ENCODE measurements at regions of chr6 and their contacts with region 1.

Region 1: GRCh38 chr6:797479-798077 is 104.6 kb upstream of the EXOC2 start:
- DNase-seq: peak; percentile 41
- ATAC-seq: peak; percentile 78
- H3K4me3 ChIP-seq: no peak overlapping the region
- H3K27ac ChIP-seq: no peak overlapping the region
- H3K4me1 ChIP-seq: no peaks in the 10 kb centered on the region
- H3K27me3 ChIP-seq: peaks cover 22% of the 10 kb centered on the region
- CTCF ChIP-seq: peak; percentile 62 to 77 (median 73)
- POLR2A ChIP-seq: no peak
- RAD21 ChIP-seq: peak; percentile 87

Region 2: DNA sequence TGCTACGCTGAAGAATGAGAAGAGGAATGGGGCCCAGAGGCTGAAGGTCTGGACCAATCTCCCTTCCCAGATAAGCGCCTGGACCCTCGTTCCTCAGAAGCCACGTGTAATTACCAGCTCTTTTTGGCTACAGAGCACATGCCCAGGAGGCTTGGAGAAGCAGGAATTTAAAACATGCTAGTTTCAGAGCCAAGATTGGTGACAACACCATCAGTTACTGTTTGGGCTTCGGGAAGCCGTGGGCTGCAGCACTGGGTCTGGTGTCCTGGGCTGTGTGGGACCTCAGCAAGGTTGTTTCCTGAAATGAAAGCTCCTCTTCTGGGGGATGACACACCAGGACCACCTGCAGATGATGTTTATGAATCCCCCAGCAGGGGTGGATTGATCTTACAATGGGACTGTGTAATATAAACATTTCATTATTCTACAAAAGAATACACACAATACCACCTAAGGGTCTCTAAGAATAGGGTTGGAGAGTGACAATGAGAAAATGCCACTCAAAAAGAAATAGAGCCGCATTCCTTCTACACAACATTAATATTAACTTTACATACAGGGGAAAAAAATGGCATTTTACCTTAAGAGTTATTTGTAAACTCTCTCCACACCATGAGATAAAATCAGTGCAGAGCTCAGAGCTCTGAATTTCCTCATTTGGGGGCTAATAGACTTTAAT is 306.5 kb after region 1 on chr6:
- CTCF ChIA-PET with region 1: no interaction called
- POLR2A ChIA-PET with region 1: no interaction called
- RAD21 ChIA-PET with region 1: no interaction called
- intact Hi-C with region 1: no loop called
- DNase-seq: no peak
- ATAC-seq: no peak
- H3K4me3 ChIP-seq: no peak overlapping the region
- H3K27ac ChIP-seq: no peak overlapping the region
- H3K4me1 ChIP-seq: no peaks in the 10 kb centered on the region
- H3K27me3 ChIP-seq: no peaks in the 10 kb centered on the region
- CTCF ChIP-seq: no peak
- POLR2A ChIP-seq: no peak
- RAD21 ChIP-seq: no peak

Region 3: DNA sequence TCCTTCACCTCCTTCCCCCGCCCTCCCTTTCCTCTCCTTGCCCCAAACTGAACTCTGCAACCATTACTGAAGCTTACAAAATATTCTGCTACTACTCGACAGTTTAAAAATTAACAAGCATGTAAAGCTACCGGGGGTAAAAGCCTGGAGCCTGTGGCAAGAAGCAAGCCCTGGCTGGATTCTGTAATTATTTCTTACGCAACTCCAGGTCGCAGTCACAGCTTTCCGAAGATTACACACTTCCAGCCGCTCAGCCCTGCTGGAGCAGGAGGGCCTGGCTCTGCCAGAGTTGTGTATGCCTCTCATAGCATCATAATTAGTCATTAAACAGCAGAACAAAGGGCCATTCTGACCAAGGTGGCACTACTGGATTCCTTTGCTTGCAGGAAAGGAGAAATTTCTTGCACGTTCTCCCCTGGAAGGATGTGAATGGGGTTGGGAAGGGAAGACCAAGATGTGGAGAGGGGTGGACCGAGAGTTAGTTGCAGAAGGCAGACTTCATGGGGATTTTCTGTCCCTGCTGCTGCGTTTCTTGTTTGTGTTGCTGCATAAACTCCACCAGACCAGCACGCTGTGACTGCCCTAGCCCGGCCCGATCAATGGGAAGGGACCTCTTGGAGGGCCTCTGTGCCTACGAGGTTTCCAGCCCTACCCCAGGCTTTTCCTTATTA is 537.9 kb after region 1 on chr6:
- CTCF ChIA-PET with region 1: interaction called, 3 read pairs
- POLR2A ChIA-PET with region 1: no interaction called
- RAD21 ChIA-PET with region 1: interaction called in 1 of 2 experiments, 3 read pairs
- intact Hi-C with region 1: loop called (anchors 1 kb)
- DNase-seq: peak; percentile 87
- ATAC-seq: peak; percentile 92
- H3K4me3 ChIP-seq: peak overlapping the region; percentile 10 to 40; a peak in 3 of 4 replicates
- H3K27ac ChIP-seq: peak overlapping the region; percentile 63
- H3K4me1 ChIP-seq: peaks cover 9 to 33% of the 10 kb centered on the region in 2 experiments; a peak in 3 of 4 replicates
- H3K27me3 ChIP-seq: no peaks in the 10 kb centered on the region
- CTCF ChIP-seq: no peak
- POLR2A ChIP-seq: no peak
- RAD21 ChIP-seq: peak; percentile 48

Region 4: DNA sequence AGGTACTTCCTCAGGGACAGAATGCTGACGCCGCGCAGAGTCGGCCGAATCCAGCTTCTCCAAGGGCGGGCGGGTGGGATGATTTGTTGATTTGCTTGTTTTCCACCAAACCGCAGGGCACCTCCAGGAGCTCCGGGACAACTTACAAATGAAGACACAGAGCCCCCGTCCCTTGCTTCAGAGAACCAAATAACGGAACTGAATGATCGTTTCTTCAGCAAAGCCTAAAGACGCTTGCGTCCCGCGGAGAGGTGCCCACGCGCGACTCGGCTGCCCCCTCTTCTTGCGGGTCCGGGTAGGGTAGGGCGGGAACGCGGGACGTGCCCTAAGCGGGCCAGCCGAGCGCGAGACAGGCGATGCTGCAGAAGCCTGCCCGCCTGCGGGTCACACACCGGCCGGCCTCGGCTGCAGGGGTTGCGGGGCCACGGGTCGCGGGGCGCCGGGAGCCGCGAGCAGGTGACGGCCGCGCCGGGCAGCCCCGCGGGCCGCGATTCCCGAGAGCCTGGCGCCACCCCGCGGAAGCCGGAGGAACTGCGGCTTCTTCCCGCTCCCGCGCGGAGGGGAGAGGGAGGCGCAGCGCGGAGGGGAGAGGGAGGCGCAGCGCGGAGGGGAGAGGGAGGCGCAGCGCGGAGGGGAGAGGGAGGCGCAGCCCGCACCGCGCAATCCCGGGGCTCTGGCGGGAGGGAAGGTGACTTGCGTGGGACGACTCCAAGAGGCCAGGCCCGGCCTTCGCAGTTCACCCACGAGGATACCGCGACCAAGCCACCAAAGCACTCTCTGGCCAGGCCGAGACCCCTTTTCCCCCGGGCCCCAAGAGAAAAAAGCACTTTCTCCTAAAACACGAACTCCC is 584.1 kb after region 1 on chr6:
- CTCF ChIA-PET with region 1: interaction called, 3 read pairs
- POLR2A ChIA-PET with region 1: no interaction called
- RAD21 ChIA-PET with region 1: no interaction called
- intact Hi-C with region 1: loop called (anchors 1 kb)
- DNase-seq: no peak
- ATAC-seq: peak; percentile 95
- H3K4me3 ChIP-seq: peak overlapping the region in 1 of 2 experiments; percentile 26; a peak in 1 of 4 replicates
- H3K27ac ChIP-seq: no peak overlapping the region
- H3K4me1 ChIP-seq: peaks cover 0 to 8% of the 10 kb centered on the region in 2 experiments; a peak in 1 of 4 replicates
- H3K27me3 ChIP-seq: no peaks in the 10 kb centered on the region
- CTCF ChIP-seq: peak; percentile 44 to 69 (median 68); a peak in 4 of 6 replicates
- POLR2A ChIP-seq: no peak
- RAD21 ChIP-seq: peak; percentile 76

Region 5: DNA sequence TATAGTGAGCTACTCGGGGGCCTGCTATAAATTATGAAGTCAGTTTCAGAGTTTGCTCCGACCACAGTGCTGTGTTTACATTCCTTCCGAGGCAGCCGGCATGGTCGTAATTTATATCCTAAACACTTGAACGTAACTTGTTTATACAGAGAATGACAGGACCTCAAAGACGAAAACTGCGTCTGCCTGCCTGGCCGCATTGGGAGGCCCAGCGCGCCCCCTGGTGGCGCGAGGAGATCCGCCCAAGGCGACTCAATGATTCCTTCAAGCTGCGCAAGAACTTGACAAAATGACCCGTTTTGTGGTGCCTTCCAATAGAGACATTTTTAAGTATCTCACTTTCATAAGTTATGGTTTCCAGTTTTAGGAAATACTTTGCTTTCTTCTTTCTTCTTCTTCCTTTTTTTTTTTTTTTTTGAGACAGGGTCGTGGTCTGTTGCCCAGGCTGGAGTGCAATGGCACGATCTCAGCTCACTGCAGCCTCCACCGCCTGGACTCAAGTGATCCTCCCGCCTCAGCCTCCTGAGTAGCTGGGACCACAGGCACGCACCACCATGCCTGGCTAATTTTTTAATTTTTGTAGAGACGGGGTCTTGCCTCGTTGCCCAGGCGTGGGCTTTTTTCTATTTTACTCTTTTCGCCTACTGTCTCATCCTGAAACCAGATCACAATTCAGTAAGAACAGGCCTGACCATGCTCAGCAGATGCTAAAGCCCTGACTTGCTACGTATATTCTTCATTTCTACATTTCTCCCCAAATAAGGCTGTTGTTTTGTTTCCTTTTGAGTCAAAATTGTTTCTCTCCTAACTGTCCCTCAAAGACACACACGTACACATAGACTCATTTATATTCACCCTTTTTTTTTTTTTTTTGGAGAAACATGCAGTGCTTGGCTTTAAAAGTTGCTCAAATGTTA is 599.6 kb after region 1 on chr6:
- CTCF ChIA-PET with region 1: no interaction called
- POLR2A ChIA-PET with region 1: no interaction called
- RAD21 ChIA-PET with region 1: no interaction called
- intact Hi-C with region 1: loop called (anchors 1 kb)
- DNase-seq: peak; percentile 54
- ATAC-seq: peak; percentile 90
- H3K4me3 ChIP-seq: peak overlapping the region in 1 of 2 experiments; percentile 15; a peak in 1 of 4 replicates
- H3K27ac ChIP-seq: no peak overlapping the region
- H3K4me1 ChIP-seq: 0 out of 4 replicates have a peak, but pooled peaks cover 0 to 3% of the 10 kb centered on the region in 2 experiments
- H3K27me3 ChIP-seq: no peaks in the 10 kb centered on the region
- CTCF ChIP-seq: peak; percentile 78 to 98 (median 97)
- POLR2A ChIP-seq: no peak
- RAD21 ChIP-seq: peak; percentile 81

Region 6: DNA sequence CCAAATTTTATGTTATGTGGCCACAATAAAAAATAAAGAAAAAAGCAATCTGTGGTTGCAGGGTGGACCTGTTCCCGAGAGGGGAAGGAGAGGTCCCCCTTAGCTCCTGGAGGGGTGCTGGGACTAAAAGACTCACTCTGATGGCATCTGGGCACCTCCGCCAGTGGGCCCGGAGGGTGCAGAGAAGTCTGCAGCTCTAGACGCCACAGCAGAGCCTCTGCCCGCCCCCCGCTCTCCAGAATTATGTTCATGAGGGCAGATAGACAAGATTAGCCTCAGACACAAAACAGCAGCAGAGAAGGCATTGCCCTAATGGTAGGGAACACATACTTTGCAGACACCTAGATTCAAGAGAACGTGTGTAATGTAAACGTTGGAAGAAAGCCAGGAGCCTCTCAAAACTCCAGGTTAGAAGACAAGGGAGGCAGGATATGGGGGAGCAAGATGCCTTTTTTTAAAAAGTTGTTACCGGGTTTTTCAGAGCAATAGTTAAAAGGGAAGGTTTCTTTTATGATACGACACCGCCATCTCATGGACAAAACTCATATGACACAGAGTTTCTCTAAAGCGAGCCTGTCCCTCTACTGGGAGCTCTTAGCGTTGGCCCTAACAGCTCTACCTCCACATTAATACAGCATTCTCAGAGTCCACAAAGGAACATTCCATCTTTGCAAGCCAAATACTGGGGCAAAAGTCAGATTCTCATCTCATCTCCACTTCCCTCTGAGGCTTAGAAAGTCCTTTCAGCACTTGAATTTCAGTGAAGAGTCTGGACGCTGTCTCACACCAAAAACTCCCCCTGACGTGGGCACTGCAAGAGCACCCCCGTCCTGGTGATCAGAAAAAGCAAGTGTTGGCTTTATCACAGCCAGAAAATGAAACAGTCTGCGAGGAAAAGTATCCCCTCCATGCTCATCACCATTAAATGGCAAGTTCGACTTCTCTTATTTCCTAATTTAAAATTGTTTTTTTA is 639.0 kb after region 1 on chr6:
- CTCF ChIA-PET with region 1: interaction called, 3 read pairs
- POLR2A ChIA-PET with region 1: no interaction called
- RAD21 ChIA-PET with region 1: no interaction called
- intact Hi-C with region 1: loop called (anchors 5 kb)
- DNase-seq: peak; percentile 57
- ATAC-seq: peak; percentile 97
- H3K4me3 ChIP-seq: no peak overlapping the region
- H3K27ac ChIP-seq: no peak overlapping the region
- H3K4me1 ChIP-seq: peaks cover 0 to 5% of the 10 kb centered on the region in 2 experiments; a peak in 2 of 4 replicates
- H3K27me3 ChIP-seq: peaks cover 5% of the 10 kb centered on the region; the same call in 1 of the 2 replicates
- CTCF ChIP-seq: peak; percentile 61 to 84 (median 72)
- POLR2A ChIP-seq: no peak
- RAD21 ChIP-seq: peak; percentile 81